HEK293 (cell line): ENCODE measurements at regions of chr7 and their contacts with region 1.

Region 1: DNA sequence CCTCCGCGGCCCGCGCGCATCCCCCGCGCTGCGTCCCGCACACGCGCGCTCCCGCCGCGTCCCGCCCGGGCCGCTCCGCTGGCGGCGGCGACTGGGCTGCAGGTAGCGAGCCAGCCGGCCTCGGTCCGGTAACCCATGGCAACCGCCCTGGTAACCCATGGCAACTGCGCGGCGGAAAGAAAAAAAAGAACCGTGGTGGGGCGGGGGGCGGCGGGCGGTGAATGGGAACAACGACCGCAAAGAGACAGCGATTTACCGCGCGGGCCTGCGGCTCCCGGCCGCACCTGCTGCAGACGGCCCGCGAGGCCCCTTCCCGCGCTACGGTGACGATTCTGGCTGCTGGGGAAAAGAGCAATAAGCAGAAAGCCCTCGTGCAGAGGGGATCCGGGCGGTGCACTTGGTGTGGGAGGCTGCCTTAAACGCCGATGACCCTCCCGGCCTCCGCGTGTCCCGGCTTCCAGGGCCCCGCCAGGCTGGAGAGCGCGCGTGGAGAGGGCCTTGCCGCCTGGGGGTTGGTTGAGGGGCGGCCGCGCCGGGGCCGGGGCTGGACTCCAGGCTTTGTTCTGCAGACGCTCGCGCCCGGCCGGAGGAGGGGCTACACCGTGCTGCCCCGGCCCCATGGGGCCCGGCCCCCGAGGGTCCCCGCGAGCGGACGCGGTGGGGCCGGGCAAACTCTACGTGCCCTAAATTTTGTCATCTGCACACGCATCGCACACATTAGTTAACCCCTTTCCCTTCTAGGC is 84.7 kb downstream of the SNX10 start:
- H3K4me3 ChIP-seq: peak overlapping the region; percentile 66
- H3K27ac ChIP-seq: peak overlapping the region; percentile 99
- H3K4me1 ChIP-seq: peaks cover 31% of the 10 kb centered on the region
- CTCF ChIP-seq: no peak

Region 2: GRCh38 chr7:26667500-26668133 is 291.3 kb after region 1 on chr7:
- CTCF ChIA-PET with region 1: interaction called, 31 read pairs
- POLR2A ChIA-PET with region 1: interaction called, 4 read pairs
- H3K4me3 ChIP-seq: no peak overlapping the region
- H3K27ac ChIP-seq: no peak overlapping the region
- H3K4me1 ChIP-seq: peaks cover 16% of the 10 kb centered on the region
- CTCF ChIP-seq: peak; percentile 90

Region 3: GRCh38 chr7:26958834-26959233 is 582.5 kb after region 1 on chr7:
- CTCF ChIA-PET with region 1: no interaction called
- POLR2A ChIA-PET with region 1: no interaction called
- H3K4me3 ChIP-seq: no peak overlapping the region
- H3K27ac ChIP-seq: no peak overlapping the region
- H3K4me1 ChIP-seq: 0 out of 2 replicates have a peak, but pooled peaks cover 4% of the 10 kb centered on the region
- CTCF ChIP-seq: no peak